ENCODE measurements at regions of chr7 and their contacts with region 1.

Region 1: GRCh38 chr7:1862560-1862959 is 192.5 kb downstream of the ELFN1 start:
- DNase-seq: no peak
- H3K4me3 ChIP-seq: no peak overlapping the region
- H3K27ac ChIP-seq: no peak overlapping the region
- H3K4me1 ChIP-seq: no peaks in the 10 kb centered on the region
- H3K27me3 ChIP-seq: no peaks in the 10 kb centered on the region
- CTCF ChIP-seq: no peak

Region 2: DNA sequence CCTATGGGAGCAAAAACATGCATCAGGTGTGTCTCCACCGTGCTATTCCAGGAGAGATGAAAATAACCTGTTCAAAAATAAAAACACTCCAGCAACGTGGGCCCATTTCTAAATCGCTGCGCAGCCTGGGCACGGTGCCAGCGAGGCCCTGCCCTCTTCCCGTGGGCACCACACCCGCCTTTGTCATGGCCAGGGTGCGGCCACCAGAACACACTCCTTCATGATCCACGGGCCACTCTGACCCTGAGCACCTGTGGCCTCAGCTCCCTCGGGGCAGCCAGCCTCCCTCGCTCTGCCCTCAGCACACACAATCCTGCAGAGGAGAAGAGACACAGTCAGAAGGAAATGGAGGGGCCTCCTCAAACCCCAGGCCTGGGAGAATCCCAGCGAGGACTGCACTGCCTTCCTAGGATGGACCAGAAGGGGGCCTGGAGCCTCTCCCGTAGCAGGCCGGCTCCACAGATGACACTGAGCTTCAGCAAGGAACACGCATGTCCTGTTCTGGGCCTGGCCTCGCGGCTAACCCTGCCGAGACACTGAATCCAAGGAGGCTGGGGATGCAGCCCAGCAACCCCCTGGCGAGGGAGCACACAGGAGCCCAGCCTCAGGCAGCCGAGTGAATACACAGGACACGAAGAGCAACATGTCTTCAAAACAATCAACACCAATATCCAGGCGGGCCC is 201.2 kb after region 1 on chr7:
- CTCF ChIA-PET with region 1: interaction called, 18 read pairs
- dilution Hi-C with region 1: no loop called
- in situ Hi-C with region 1: no loop called
- intact Hi-C with region 1: no loop called
- DNase-seq: peak; percentile 8
- H3K4me3 ChIP-seq: no peak overlapping the region
- H3K27ac ChIP-seq: no peak overlapping the region
- H3K4me1 ChIP-seq: peaks cover 6% of the 10 kb centered on the region
- H3K27me3 ChIP-seq: no peaks in the 10 kb centered on the region
- CTCF ChIP-seq: no peak